ENCODE measurements at regions of chr6 and their contacts with region 1.

Region 1: DNA sequence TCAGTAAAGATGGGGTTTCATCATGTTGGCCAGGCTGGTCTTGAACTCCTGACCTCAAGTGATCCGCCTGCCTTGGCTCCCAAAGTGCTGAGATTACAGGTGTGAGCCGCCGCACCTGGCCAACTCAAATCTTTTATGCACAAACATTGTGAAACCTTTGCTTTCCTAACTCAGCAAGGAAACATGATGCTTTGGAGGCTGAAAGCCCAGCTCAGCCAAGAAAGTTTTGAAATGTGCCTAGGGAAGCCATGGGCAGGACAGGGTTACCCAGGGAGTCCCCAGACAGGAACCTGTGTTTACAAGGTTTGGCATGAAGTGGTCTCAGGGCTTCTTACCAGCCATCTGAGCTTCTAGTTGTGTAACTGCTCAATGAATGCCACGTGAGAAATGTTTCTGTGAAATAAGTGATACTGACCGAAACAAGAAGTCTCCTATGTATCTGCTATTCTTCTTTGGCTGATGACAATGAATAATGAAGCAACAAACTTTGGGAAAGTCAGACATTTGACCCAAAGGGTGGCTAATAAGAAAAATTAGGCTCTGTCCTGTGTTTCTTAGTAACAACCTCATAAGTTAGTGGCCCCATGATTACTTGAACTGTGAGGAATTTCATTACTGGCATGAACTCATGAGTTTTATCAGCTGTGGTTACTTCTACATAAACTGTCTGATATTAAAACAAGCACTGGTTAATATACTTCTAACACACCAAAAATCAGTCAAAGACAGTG is 163.5 kb downstream of the KIF6 start:
- DNase-seq: no peak
- H3K4me3 ChIP-seq: no peak overlapping the region
- H3K27ac ChIP-seq: no peak overlapping the region
- H3K4me1 ChIP-seq: peaks cover 0 to 4% (median 0%) of the 10 kb centered on the region in 4 donors
- H3K27me3 ChIP-seq: no peaks in the 10 kb centered on the region
- CTCF ChIP-seq: no peak
- EP300 ChIP-seq: no peak
- POLR2A ChIP-seq: no peak

Region 2: GRCh38 chr6:39707962-39708683 is 146.4 kb after region 1 on chr6:
- in situ Hi-C with region 1: no loop called
- intact Hi-C with region 1: loop called (anchors 5 kb)
- DNase-seq: no peak
- H3K4me3 ChIP-seq: no peak overlapping the region
- H3K27ac ChIP-seq: no peak overlapping the region
- H3K4me1 ChIP-seq: no peaks in the 10 kb centered on the region
- H3K27me3 ChIP-seq: no peaks in the 10 kb centered on the region
- CTCF ChIP-seq: no peak
- EP300 ChIP-seq: no peak
- POLR2A ChIP-seq: no peak

Region 3: GRCh38 chr6:39892490-39893129 is 330.9 kb after region 1 on chr6:
- in situ Hi-C with region 1: no loop called
- intact Hi-C with region 1: no loop called
- DNase-seq: peak; percentile 66
- H3K4me3 ChIP-seq: no peak overlapping the region
- H3K27ac ChIP-seq: no peak overlapping the region
- H3K4me1 ChIP-seq: peaks cover 0 to 10% (median 2%) of the 10 kb centered on the region in 4 donors
- H3K27me3 ChIP-seq: no peaks in the 10 kb centered on the region
- CTCF ChIP-seq: peak; percentile 51 to 69 (median 65)
- EP300 ChIP-seq: no peak
- POLR2A ChIP-seq: no peak